HepG2 (cell line): ENCODE measurements at regions of chr11 and their contacts with region 1.

Region 1: GRCh38 chr11:76782526-76783293 is 446 bp upstream of the TSKU start:
- DNase-seq: peak; percentile 82
- ATAC-seq: peak; percentile 48
- H3K4me3 ChIP-seq: peak overlapping the region; percentile 88 to 97 (median 92)
- H3K27ac ChIP-seq: peak overlapping the region; percentile 93
- H3K4me1 ChIP-seq: peaks cover 62% of the 10 kb centered on the region
- H3K27me3 ChIP-seq: no peaks in the 10 kb centered on the region
- CTCF ChIP-seq: no peak
- EP300 ChIP-seq: no peak
- POLR2A ChIP-seq: no peak
- RAD21 ChIP-seq: peak; percentile 56; the same call in 1 of the 2 replicates

Region 2: GRCh38 chr11:76768088-76768908 is 14.4 kb before region 1 on chr11:
- CTCF ChIA-PET with region 1: no interaction called
- POLR2A ChIA-PET with region 1: interaction called, 100 read pairs
- in situ Hi-C with region 1: no loop called
- intact Hi-C with region 1: loop called (anchors 2 kb)
- DNase-seq: peak; percentile 29
- ATAC-seq: peak; percentile 33
- H3K4me3 ChIP-seq: peak overlapping the region; percentile 18 to 57 (median 34); a peak in 3 of 6 replicates
- H3K27ac ChIP-seq: peak overlapping the region; percentile 88
- H3K4me1 ChIP-seq: peaks cover 89% of the 10 kb centered on the region
- H3K27me3 ChIP-seq: no peaks in the 10 kb centered on the region
- CTCF ChIP-seq: no peak
- EP300 ChIP-seq: no peak
- POLR2A ChIP-seq: no peak
- RAD21 ChIP-seq: no peak

Region 3: DNA sequence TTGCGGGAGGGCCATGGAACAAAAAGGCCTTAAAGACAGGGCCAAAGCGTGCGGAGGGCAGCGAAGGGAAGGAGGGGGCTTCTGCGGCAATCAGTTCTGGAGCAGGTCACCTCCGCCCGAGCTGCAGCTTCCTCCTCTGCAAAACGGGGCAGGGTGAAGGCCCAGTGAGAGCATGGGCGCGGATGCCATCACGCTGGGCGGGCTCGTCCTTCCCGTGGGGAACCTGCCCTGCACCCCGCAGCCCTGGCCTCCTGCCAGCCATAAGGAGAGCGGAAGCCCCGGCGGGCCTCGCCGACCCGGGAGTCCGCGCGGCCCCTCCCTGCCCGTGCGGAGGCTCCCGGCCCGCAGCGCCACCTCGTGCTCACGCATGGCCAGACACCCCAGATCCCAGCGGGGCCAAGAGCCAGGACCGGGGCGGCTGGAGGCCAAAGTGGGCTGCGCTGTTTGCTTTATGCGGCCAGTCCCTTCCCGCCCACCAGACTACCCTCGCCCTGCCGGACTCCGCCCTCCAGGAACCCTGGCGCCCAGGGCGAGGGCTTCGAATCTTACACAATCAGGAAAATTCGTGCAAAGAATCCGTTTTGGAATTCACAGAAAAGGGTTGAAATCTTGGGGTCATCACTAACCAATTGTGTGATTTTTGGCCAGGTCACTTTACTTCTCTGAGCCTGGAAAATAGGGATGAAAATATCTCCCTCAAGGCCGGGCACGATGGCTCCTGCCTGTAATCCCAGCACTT is 16.5 kb after region 1 on chr11:
- CTCF ChIA-PET with region 1: no interaction called
- POLR2A ChIA-PET with region 1: interaction called, 16 read pairs
- in situ Hi-C with region 1: no loop called
- intact Hi-C with region 1: loop called (anchors 2 kb)
- DNase-seq: peak; percentile 81
- ATAC-seq: peak; percentile 88
- H3K4me3 ChIP-seq: no peak overlapping the region; a peak in 1 of 6 replicates
- H3K27ac ChIP-seq: no peak overlapping the region
- H3K4me1 ChIP-seq: peaks cover 63% of the 10 kb centered on the region
- H3K27me3 ChIP-seq: no peaks in the 10 kb centered on the region; a peak in 2 of 5 replicates
- CTCF ChIP-seq: peak; percentile 96
- EP300 ChIP-seq: peak in 1 of 2 experiments; percentile 44; a peak in 1 of 4 replicates
- POLR2A ChIP-seq: 0 out of 4 replicates have a peak, but pooled peaks of 1 of the 2 experiments have one; percentile 25
- RAD21 ChIP-seq: peak; percentile 99